ENCODE measurements at regions of chr12 and their contacts with region 1.

Region 1: GRCh38 chr12:28190321-28191050 is at the start of gene CCDC91:
- DNase-seq: peak; percentile 81
- ATAC-seq: peak; percentile 83
- H3K4me3 Mint-ChIP-seq: peak within 1 kb of the TSS; percentile 97
- H3K27ac Mint-ChIP-seq: peak within 1 kb of the TSS; percentile 98
- H3K4me1 Mint-ChIP-seq: peaks cover 35% of the 10 kb centered on the region
- H3K27me3 Mint-ChIP-seq: no peaks in the 10 kb centered on the region
- CTCF ChIP-seq: no peak
- total RNA-seq, gene CCDC91: 43.6 and 46.3 TPM in 2 replicates

Region 2: GRCh38 chr12:27243804-27244683 is 946.4 kb before region 1 on chr12 and contains the start of gene STK38L:
- CTCF ChIA-PET with region 1: no interaction called
- POLR2A ChIA-PET with region 1: no interaction called
- intact Hi-C with region 1: loop called (anchors 10 kb)
- DNase-seq: peak; percentile 97
- ATAC-seq: peak; percentile 97
- H3K4me3 Mint-ChIP-seq: peak within 1 kb of the TSS; percentile 98
- H3K27ac Mint-ChIP-seq: peak within 1 kb of the TSS; percentile 95
- H3K4me1 Mint-ChIP-seq: peaks cover 46% of the 10 kb centered on the region
- H3K27me3 Mint-ChIP-seq: no peaks in the 10 kb centered on the region
- CTCF ChIP-seq: no peak
- total RNA-seq, gene STK38L: 24.2 and 26.3 TPM in 2 replicates

Region 3: DNA sequence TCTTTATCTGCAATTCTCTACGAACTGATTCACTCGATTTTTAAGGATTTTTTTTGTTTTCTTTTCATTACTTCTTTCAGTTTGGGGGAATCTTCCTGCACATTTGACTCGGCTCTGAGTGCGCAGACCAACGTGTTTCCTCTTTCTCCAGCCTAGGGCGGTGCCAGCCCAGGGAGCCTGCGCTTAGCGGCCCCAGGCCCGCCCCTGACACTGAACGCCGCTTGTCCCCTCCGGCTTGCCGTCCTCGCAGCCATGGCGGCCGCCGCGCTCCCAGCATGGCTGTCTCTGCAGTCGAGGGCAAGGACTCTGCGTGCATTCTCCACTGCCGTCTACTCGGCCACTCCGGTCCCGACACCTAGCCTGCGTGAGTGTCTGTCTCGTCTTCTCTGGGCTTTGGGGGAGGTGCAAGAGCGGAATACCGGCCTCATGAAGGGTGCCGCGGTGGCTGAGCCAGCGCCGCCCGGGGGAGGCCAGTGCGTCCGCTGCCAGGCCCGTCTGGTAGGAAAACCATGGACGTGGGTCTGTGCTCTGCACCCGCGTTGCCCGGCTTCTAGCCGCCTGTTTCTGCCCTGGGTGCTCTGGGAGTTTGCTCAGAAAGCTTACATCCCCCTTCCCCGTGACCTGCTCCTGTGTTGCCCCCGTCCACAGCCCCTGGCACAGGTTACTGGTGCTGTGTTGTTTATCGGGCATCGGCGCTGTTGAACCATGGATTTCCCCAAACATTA is 479.7 kb before region 1 on chr12 and contains the start of gene MRPS35:
- CTCF ChIA-PET with region 1: no interaction called
- POLR2A ChIA-PET with region 1: no interaction called
- intact Hi-C with region 1: loop called (anchors 1 kb)
- DNase-seq: peak; percentile 92
- ATAC-seq: peak; percentile 99
- H3K4me3 Mint-ChIP-seq: peak within 1 kb of the TSS; percentile 99
- H3K27ac Mint-ChIP-seq: peak within 1 kb of the TSS; percentile 99
- H3K4me1 Mint-ChIP-seq: peaks cover 29% of the 10 kb centered on the region
- H3K27me3 Mint-ChIP-seq: no peaks in the 10 kb centered on the region
- CTCF ChIP-seq: no peak
- total RNA-seq, gene MRPS35: 36.2 and 36.8 TPM in 2 replicates

Region 4: GRCh38 chr12:28223025-28223554 is 32.6 kb after region 1 on chr12:
- CTCF ChIA-PET with region 1: interaction called, 3 read pairs
- POLR2A ChIA-PET with region 1: interaction called, 6 read pairs
- intact Hi-C with region 1: loop called (anchors 2 kb)
- DNase-seq: no peak
- ATAC-seq: peak; percentile 75
- H3K4me3 Mint-ChIP-seq: peak overlapping the region; percentile 45
- H3K27ac Mint-ChIP-seq: peak overlapping the region; percentile 57
- H3K4me1 Mint-ChIP-seq: peaks cover 52% of the 10 kb centered on the region
- H3K27me3 Mint-ChIP-seq: no peaks in the 10 kb centered on the region
- CTCF ChIP-seq: no peak

Region 5: DNA sequence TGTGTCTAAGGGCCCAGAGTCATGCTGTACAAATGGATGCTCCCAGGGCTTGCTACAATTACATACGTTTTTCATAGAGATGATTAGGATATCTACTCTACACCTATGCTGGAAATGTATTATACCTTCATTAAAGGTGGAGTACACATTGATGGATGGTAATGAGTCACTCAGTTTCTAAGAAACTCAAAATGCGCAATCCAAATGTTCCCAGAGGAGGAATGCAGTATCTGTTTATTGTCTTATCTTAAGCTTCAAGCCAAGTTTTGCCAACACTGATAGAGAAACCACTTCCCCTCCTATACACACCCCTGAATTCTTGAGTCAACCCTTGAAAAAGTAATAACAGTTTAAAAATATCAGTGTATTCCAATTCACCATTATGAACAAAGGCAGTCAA is 692.0 kb after region 1 on chr12:
- CTCF ChIA-PET with region 1: no interaction called
- POLR2A ChIA-PET with region 1: no interaction called
- intact Hi-C with region 1: no loop called
- DNase-seq: no peak
- ATAC-seq: no peak
- H3K4me3 Mint-ChIP-seq: no peak overlapping the region
- H3K27ac Mint-ChIP-seq: no peak overlapping the region
- H3K4me1 Mint-ChIP-seq: no peaks in the 10 kb centered on the region
- H3K27me3 Mint-ChIP-seq: no peaks in the 10 kb centered on the region
- CTCF ChIP-seq: no peak

Region 6: DNA sequence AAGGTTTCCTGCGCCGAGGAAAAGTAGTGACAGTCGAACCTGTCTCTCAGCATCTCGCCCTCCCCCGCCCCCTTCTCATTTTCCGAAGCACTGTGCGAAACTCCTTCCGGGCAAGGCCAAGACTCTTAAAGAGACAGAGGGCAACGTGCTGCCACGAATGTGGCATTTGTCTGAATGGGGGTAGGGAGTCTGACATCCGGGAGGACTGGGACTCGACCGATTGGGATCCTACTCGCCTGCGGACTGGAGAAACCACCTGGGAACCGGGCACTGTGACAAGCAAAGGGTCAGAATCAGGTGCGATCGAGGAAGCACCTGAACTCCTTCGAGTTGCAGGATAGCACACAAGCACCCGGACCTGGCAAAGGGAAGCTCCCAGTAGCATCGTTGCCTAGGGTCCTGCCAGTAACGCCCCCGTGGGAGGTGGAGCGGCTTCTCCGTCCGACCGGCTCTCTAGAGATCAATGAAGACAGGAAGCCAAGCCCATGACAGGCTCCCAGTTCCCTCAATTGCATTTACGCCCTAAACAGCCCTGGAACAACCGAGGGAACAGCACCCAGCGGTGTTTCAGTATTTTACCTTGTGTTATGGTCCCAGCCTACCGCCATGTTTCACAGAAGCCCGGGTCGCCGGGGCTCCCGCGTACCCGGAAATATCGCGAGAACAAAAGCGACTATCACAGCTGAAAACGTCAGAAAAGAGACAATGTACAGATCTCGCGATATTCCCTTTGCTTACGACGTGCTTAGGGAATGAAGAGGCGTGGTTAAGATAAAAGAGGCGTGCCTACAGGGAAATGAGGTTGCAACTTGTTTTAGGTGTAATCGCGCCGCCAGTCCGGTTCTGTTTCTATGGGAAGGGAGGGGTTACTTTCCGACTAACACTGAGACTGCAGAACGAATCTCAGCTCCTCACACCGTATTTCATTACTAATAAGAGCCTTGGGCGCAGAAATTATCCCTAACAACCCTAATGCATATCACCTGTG is 1190.3 kb after region 1 on chr12 and contains the start of gene ERGIC2:
- CTCF ChIA-PET with region 1: no interaction called
- POLR2A ChIA-PET with region 1: no interaction called
- intact Hi-C with region 1: loop called (anchors 1 kb)
- DNase-seq: peak; percentile 73
- ATAC-seq: peak; percentile 94
- H3K4me3 Mint-ChIP-seq: peak within 1 kb of the TSS; percentile 94
- H3K27ac Mint-ChIP-seq: peak within 1 kb of the TSS; percentile 94
- H3K4me1 Mint-ChIP-seq: peaks cover 42% of the 10 kb centered on the region
- H3K27me3 Mint-ChIP-seq: no peaks in the 10 kb centered on the region
- CTCF ChIP-seq: no peak
- total RNA-seq, gene ERGIC2: 43.7 TPM in 2 replicates